CD4-positive, alpha-beta memory T cell (primary cell): ENCODE measurements at regions of chr20 and their contacts with region 1.

Region 1: DNA sequence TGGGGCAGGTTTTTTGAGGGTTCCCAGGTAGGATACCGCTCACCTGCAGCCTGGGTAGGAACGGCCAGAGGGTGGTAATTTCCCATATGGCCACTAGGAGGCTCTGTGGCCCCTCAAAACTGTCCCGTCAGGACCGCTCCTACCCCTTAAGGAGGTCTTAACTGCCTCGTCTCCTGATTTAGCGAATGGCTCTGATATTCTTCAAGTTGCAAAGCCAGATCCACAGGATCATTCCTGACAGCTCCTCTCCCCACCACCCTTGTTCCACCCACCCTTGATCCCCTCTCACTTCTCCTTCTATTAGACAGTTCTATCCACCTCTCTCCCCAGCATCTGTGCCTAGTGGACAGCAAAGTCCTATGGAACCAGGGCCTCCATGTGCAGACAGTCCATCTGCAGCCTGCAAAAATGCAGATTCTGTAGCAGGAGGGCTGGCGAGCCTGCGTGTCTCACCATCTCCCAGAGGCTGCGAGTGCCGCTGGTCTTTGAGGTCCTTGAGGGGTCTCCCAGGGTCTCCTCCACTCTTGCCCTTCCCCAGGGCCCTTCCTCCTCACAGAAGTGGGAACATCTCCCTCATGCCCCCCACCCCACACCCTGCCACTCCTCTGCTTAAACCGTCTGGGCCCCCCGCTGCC is 34.3 kb upstream of the ZBP1 start:
- DNase-seq: peak in 4 of 5 donors; percentile 45 to 55 (median 50)
- H3K4me3 ChIP-seq: no peak overlapping the region
- H3K4me3 Mint-ChIP-seq: peak overlapping the region in 2 of 8 donors; percentile 6 to 39
- H3K27ac ChIP-seq: no peak overlapping the region
- H3K27ac Mint-ChIP-seq: peak overlapping the region in 2 of 7 donors; percentile 76 to 80
- H3K4me1 ChIP-seq: peaks cover 17% of the 10 kb centered on the region
- H3K4me1 Mint-ChIP-seq: peaks cover 13 to 29% (median 21%) of the 10 kb centered on the region in 4 donors
- H3K27me3 ChIP-seq: no peaks in the 10 kb centered on the region
- H3K27me3 Mint-ChIP-seq: peaks cover 0 to 3% of the 10 kb centered on the region in 2 donors

Region 2: DNA sequence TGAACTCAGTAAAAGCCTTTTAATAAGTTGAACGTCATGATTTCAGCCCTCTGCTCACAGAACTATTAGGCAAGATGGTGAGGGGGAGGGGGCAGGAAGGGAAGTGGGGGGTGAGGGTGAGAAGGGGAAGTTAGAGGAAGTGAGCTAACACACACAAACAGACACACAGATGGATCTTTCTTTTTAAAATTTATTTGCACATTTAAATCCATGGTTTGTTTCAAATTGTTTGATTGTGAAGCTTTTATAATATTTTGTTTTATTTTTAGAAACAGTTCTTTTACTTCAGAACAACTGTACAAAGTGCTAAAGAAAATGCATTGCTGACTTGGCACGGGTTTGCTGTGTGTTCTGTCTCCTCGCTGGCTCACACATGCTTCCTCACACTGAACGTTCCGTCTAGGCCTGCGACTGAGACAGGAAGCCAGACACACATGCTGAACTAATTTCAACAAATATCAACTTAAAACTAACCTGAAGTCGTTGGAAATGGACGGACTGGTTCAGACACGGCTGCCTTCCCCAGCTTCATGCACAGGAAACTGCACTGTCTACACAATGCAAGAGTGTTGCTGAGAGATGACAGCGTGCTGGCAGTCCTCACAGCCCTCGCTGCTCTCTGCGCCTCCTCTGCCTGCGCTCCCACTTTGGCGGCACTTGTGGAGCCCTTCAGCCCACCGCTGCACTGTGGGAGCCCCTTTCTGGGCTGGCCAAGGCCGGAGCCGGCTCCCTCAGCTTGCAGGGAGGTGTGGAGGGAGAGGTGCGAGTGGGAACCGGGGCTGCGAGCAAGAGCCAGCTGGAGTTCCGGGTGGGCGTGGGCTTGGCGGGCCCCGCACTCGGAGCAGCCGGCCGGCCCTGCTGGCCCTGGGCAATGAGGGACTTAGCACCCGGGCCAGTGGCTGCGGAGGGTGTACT is 26.2 kb before region 1 on chr20:
- CTCF ChIA-PET with region 1: interaction called, 42 read pairs
- POLR2A ChIA-PET with region 1: interaction called, 5 read pairs
- intact Hi-C with region 1: loop called (anchors 2 kb)
- DNase-seq: peak; percentile 61 to 88 (median 67)
- H3K4me3 ChIP-seq: peak overlapping the region in 1 of 2 donors; percentile 18
- H3K4me3 Mint-ChIP-seq: peak overlapping the region; percentile 80 to 92 (median 83)
- H3K27ac ChIP-seq: peak overlapping the region; percentile 71
- H3K27ac Mint-ChIP-seq: peak overlapping the region; percentile 89 to 99 (median 98)
- H3K4me1 ChIP-seq: peaks cover 67% of the 10 kb centered on the region
- H3K4me1 Mint-ChIP-seq: peaks cover 36 to 87% (median 61%) of the 10 kb centered on the region in 4 donors
- H3K27me3 ChIP-seq: peaks cover 6% of the 10 kb centered on the region
- H3K27me3 Mint-ChIP-seq: peaks cover 0 to 5% of the 10 kb centered on the region in 2 donors

Region 3: DNA sequence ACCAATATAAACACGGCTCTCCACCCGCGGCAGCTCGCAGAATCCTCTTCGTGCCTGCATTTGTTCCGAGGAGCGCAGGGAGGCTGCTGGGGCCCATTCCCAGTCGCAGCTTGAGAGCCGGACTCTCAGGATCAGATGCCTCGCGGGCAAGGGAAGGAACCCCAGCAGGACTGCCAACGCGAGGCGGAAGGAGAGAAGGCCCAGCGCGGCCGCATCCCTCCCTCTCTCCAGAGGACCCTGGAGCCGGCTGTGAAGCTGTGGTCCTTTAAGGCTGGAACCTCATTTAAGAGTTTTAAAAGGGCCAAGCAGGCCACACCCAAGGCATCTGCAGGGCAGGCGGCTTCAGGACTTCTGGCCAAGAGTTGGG is 10.0 kb after region 1 on chr20:
- CTCF ChIA-PET with region 1: no interaction called
- POLR2A ChIA-PET with region 1: no interaction called
- intact Hi-C with region 1: no loop called
- DNase-seq: no peak
- H3K4me3 ChIP-seq: no peak overlapping the region
- H3K4me3 Mint-ChIP-seq: no peak overlapping the region
- H3K27ac ChIP-seq: no peak overlapping the region
- H3K27ac Mint-ChIP-seq: no peak overlapping the region
- H3K4me1 ChIP-seq: no peaks in the 10 kb centered on the region
- H3K4me1 Mint-ChIP-seq: peaks cover 0 to 2% (median 0%) of the 10 kb centered on the region in 4 donors
- H3K27me3 ChIP-seq: no peaks in the 10 kb centered on the region
- H3K27me3 Mint-ChIP-seq: no peaks in the 10 kb centered on the region

Region 4: DNA sequence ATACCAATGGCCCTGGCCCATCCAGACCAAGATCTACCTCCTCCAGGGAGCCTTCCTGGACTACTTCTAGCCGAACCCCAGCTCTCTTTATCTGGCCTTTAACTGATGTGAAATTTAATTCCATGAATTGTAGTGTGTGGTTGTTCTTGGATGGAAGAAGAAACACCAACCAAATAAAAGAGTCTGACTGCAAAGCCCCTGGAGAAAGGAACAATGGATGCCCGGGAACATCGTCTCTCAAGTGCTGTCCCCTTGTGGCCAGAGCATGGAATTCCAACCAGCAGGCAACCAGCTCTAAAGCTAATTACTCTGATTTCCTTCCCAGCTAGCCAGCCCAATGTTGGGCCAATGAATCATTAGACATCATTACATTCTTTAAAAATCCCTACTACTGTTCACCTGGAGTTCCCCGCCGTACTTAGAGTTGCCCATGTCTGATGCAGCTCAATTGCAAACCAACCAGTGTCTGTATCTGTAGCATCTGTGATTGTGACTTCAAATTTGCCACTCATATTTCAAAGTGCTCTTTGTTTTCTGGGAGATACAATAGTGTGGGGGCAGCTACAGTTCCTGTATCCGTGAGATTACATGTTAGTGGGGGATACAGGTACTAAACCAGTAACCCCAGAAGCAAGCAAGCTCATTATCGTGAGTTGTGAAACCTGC is 432.8 kb after region 1 on chr20:
- CTCF ChIA-PET with region 1: interaction called, 15 read pairs
- POLR2A ChIA-PET with region 1: no interaction called
- intact Hi-C with region 1: no loop called
- DNase-seq: peak in 1 of 5 donors; percentile 4
- H3K4me3 ChIP-seq: no peak overlapping the region
- H3K4me3 Mint-ChIP-seq: no peak overlapping the region
- H3K27ac ChIP-seq: no peak overlapping the region
- H3K27ac Mint-ChIP-seq: no peak overlapping the region
- H3K4me1 ChIP-seq: no peaks in the 10 kb centered on the region
- H3K4me1 Mint-ChIP-seq: no peaks in the 10 kb centered on the region
- H3K27me3 ChIP-seq: no peaks in the 10 kb centered on the region
- H3K27me3 Mint-ChIP-seq: peaks cover 0 to 14% of the 10 kb centered on the region in 2 donors

Region 5: DNA sequence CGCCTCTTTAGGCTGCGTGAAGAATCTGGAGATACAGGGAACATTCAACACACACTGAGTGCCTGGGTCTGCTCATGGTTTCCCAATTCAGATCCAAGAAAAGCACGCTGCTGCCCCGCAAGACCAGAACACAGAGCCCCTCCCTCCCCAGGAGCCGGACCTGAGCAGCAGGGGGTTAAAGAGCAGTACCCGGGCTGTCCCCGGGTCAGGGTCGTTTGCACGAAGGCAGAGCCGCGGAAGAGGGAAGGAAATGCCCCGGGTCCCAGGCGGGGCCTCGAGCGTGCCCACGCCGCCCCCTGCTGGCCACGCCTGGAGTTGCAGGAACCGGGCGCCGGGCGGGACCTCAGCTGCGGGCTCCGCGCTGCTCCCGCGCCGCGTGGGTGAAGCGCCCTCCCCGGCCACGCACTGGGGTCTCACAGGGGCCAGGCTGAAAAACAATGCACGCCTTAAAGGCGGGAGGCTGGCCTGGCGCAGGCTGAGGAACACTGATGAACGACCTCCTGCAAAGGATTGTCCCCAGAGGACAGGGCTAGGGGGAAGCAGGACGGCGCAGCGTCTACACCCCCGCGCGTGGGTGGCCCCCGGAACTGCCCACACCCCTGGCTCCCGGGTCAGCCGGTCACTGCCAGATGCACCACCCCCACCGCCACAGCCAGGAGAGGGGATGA is 525.1 kb after region 1 on chr20:
- CTCF ChIA-PET with region 1: interaction called, 27 read pairs
- POLR2A ChIA-PET with region 1: no interaction called
- intact Hi-C with region 1: no loop called
- DNase-seq: peak in 4 of 5 donors; percentile 57 to 66 (median 59)
- H3K4me3 ChIP-seq: no peak overlapping the region
- H3K4me3 Mint-ChIP-seq: peak overlapping the region; percentile 29 to 83 (median 72)
- H3K27ac ChIP-seq: no peak overlapping the region
- H3K27ac Mint-ChIP-seq: peak overlapping the region in 2 of 7 donors; percentile 22 to 36
- H3K4me1 ChIP-seq: peaks cover 10% of the 10 kb centered on the region
- H3K4me1 Mint-ChIP-seq: peaks cover 0 to 9% (median 4%) of the 10 kb centered on the region in 4 donors
- H3K27me3 ChIP-seq: peaks cover 8% of the 10 kb centered on the region
- H3K27me3 Mint-ChIP-seq: peaks cover 10 to 15% of the 10 kb centered on the region in 2 donors